ENCODE measurements at regions of chr12 and their contacts with region 1.

Region 1: GRCh38 chr12:64625243-64626077 is 15.2 kb downstream of the RASSF3 start:
- DNase-seq: peak; percentile 79
- H3K4me3 Mint-ChIP-seq: peak overlapping the region; percentile 73
- H3K27ac Mint-ChIP-seq: peak overlapping the region; percentile 94
- H3K4me1 Mint-ChIP-seq: peaks cover 26% of the 10 kb centered on the region
- H3K27me3 Mint-ChIP-seq: no peaks in the 10 kb centered on the region
- CTCF ChIP-seq: no peak

Region 2: DNA sequence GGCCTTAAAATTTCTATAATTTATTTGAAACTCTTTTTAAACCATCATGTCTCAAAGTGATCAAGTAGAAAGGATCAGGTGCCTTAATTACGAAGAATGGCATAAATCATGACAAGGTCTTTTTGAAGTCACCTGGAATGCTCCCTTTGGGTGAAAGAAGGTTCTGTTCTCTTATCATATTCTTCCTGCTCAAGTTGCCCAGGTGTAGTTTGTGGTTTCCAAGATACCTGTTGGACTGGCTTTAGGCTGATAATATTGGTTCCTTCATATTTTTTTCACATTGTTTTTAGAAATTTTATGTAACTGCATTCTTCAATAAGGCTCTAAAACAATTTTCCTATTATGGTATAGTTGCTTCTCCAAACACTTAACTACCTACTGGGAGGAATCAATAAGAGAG is 14.0 kb after region 1 on chr12:
- CTCF ChIA-PET with region 1: interaction called, 8 read pairs
- POLR2A ChIA-PET with region 1: interaction called, 20 read pairs
- intact Hi-C with region 1: no loop called
- DNase-seq: no peak
- H3K4me3 Mint-ChIP-seq: no peak overlapping the region
- H3K27ac Mint-ChIP-seq: no peak overlapping the region
- H3K4me1 Mint-ChIP-seq: peaks cover 20% of the 10 kb centered on the region
- H3K27me3 Mint-ChIP-seq: no peaks in the 10 kb centered on the region
- CTCF ChIP-seq: no peak

Region 3: DNA sequence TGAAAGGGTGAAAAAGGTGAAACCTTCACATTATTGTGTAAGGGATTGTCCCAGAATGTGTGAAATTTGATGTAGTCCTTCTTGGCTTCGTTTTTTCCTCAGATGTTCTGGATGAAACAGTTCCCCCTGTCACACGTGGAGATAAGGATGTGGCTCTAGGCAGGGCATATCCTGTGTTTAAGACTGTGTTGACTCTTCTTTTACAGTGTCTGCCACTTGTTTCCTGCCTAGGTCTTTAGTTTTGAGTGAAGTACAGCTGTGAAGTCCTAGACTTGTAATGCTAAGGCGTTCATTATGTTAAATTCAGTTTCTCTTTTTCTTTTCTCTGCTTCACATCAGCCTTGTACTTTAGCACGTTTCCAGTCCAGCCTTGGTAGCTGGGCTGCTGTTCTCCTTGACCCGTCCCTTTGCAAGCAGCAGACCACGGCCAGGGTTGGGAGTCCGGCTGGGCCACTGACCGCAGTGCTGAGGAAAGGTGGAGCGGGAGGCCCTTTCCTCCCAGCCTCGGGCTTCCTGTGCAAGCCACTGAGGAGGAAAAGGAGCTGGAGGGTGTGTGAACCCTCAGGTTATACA is 43.9 kb after region 1 on chr12:
- CTCF ChIA-PET with region 1: interaction called, 4 read pairs
- POLR2A ChIA-PET with region 1: interaction called, 13 read pairs
- intact Hi-C with region 1: loop called (anchors 2 kb)
- DNase-seq: no peak
- H3K4me3 Mint-ChIP-seq: peak overlapping the region; percentile 42
- H3K27ac Mint-ChIP-seq: peak overlapping the region; percentile 67
- H3K4me1 Mint-ChIP-seq: peaks cover 61% of the 10 kb centered on the region
- H3K27me3 Mint-ChIP-seq: no peaks in the 10 kb centered on the region
- CTCF ChIP-seq: no peak

Region 4: DNA sequence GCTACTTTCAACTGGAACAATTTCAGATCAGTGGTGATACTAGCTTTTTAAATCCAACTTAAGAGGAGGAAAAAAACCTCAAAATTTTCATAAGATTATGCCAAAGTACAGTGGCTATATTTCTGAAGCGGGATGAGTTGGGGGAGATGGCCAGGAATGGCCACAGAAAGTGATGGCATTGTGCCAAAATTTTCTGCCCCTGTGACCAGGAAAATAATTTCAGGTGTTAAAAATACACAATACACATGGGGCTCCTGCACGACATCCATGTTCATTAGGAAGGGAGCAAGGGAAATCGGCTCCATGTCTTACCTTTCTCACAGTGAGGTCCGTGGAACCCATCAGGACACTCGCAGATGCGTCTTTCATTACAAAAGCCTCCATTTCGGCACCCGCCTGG is 441.9 kb after region 1 on chr12:
- CTCF ChIA-PET with region 1: no interaction called
- POLR2A ChIA-PET with region 1: no interaction called
- intact Hi-C with region 1: no loop called
- DNase-seq: no peak
- H3K4me3 Mint-ChIP-seq: no peak overlapping the region
- H3K27ac Mint-ChIP-seq: no peak overlapping the region
- H3K4me1 Mint-ChIP-seq: no peaks in the 10 kb centered on the region
- H3K27me3 Mint-ChIP-seq: peaks cover 69% of the 10 kb centered on the region
- CTCF ChIP-seq: no peak